ENCODE measurements at regions of chr3 and their contacts with region 1.

Region 1: GRCh38 chr3:52792961-52793695 is 1.5 kb upstream of the ITIH3 start:
- DNase-seq: no peak
- H3K4me3 ChIP-seq: no peak overlapping the region
- H3K27ac ChIP-seq: peak overlapping the region in 1 of 2 donors; percentile 52
- H3K4me1 ChIP-seq: no peaks in the 10 kb centered on the region
- H3K27me3 ChIP-seq: no peaks in the 10 kb centered on the region
- CTCF ChIP-seq: no peak
- POLR2A ChIP-seq: no peak

Region 2: DNA sequence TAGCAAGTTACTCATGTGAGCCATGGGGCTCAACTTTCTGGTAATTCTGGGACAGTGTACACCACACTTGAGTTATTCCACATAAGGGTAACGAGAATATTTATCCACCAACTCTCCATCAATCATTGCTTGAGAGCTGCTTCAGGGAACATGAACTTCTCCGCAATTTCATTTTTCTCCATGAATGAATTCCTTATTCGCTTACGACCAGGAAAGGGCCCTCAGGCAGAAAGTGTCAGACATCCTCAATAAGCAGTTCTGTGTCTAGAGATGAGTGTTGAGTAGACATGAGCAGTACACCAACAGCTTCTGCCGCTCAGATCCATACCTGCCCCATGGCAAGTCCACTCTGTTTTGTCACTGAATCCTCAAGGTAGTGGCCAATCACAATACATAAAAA is 956.5 kb before region 1 on chr3:
- intact Hi-C with region 1: no loop called
- DNase-seq: no peak
- H3K4me3 ChIP-seq: no peak overlapping the region
- H3K27ac ChIP-seq: no peak overlapping the region
- H3K4me1 ChIP-seq: no peaks in the 10 kb centered on the region
- H3K27me3 ChIP-seq: no peaks in the 10 kb centered on the region
- CTCF ChIP-seq: no peak
- POLR2A ChIP-seq: no peak

Region 3: DNA sequence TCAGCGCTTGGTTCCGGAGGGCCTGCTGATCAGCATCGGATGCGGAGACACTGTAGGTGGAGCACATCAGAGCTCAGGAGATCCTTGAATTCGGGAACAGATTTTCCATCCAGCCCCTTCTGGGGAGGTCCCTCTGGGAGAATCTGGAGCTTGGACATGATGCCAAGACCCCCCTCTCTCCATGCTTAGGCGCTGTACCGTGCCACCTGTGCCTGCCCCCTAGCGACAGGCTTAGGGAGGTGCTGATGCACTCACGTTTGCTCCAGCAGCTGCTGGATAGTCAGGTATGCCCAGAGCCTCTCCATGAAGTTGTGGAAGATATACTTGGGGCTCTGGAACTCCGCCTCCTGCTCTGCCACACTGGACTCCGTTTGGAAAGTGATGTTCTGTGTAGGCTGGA is 27.6 kb after region 1 on chr3:
- intact Hi-C with region 1: loop called (anchors 2 kb)
- DNase-seq: no peak
- H3K4me3 ChIP-seq: no peak overlapping the region
- H3K27ac ChIP-seq: no peak overlapping the region
- H3K4me1 ChIP-seq: no peaks in the 10 kb centered on the region
- H3K27me3 ChIP-seq: no peaks in the 10 kb centered on the region
- CTCF ChIP-seq: no peak
- POLR2A ChIP-seq: no peak